ENCODE measurements at regions of chr1 and their contacts with region 1.

Region 1: GRCh38 chr1:234599617-234600417 is 10.2 kb downstream of the IRF2BP2 start:
- DNase-seq: peak; percentile 84 to 92 (median 86)
- ATAC-seq: peak; percentile 74
- H3K4me3 ChIP-seq: peak overlapping the region; percentile 46
- H3K27ac ChIP-seq: peak overlapping the region; percentile 90
- H3K4me1 ChIP-seq: peaks cover 21 to 49% of the 10 kb centered on the region in 2 experiments
- H3K27me3 ChIP-seq: no peaks in the 10 kb centered on the region
- CTCF ChIP-seq: peak in 1 of 3 experiments; percentile 3; a peak in 1 of 6 replicates
- EP300 ChIP-seq: peak; percentile 18; the same call in 1 of the 2 replicates
- POLR2A ChIP-seq: peak; percentile 79
- RAD21 ChIP-seq: peak; percentile 4 to 23; a peak in 2 of 4 replicates

Region 2: GRCh38 chr1:234114648-234115307 is 485.0 kb before region 1 on chr1:
- CTCF ChIA-PET with region 1: no interaction called
- POLR2A ChIA-PET with region 1: no interaction called
- in situ Hi-C with region 1: no loop called
- intact Hi-C with region 1: loop called (anchors 10 kb)
- DNase-seq: peak; percentile 35 to 57 (median 41)
- ATAC-seq: peak; percentile 76
- H3K4me3 ChIP-seq: no peak overlapping the region
- H3K27ac ChIP-seq: no peak overlapping the region
- H3K4me1 ChIP-seq: 0 out of 5 replicates have a peak, but pooled peaks cover 0 to 3% of the 10 kb centered on the region in 2 experiments
- H3K27me3 ChIP-seq: peaks cover 7 to 22% of the 10 kb centered on the region in 2 experiments; a peak in 4 of 5 replicates
- CTCF ChIP-seq: peak; percentile 59 to 86 (median 75)
- EP300 ChIP-seq: no peak
- POLR2A ChIP-seq: no peak
- RAD21 ChIP-seq: peak; percentile 65 to 73

Region 3: DNA sequence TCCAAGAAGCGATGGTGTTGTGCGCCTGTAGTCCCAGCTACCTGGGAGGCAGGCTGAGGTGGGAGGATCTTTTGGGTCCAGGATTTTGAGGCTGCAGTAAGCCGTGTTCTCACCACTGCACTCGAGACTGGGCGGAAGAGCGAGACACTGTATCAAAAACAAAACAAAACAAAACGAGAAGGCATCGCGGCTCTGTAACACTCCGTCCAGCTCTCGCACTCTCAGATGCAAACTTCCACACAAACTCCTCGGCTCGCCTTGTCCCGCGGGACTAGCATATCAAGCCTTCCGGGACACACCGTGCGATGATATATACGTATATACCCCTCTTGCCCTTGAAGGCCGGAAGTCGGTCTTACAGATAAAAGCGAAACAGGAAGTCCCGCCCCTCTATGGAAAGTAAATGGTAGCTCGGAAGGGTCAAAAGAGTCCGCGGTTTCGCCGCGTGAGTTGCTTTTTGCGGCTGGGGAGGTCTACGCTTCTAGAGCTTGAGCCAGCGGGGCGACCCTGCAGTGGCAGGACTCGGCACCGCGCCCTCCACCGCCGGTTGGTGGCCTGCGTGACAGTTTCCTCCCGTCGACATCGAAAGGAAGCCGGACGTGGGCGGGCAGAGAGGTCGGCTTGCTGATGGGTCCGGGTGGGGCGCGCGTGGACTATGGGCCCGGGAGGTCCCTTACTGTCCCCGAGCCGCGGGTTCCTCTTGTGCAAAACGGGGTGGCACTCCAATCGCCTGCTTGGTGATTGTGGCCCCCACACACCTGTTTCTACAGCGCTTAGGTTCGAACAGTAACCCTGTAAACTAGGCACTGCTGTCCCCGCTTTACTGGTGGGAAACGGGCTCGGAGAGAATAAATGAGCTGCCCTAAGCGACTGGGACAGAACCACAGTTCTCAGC is 226.5 kb before region 1 on chr1 and contains the start of gene COA6:
- CTCF ChIA-PET with region 1: no interaction called
- POLR2A ChIA-PET with region 1: interaction called, 3 read pairs
- in situ Hi-C with region 1: no loop called
- intact Hi-C with region 1: loop called (anchors 5 kb)
- DNase-seq: peak; percentile 90 to 99 (median 92)
- ATAC-seq: peak; percentile 90
- H3K4me3 ChIP-seq: peak within 1 kb of the TSS; percentile 81
- H3K27ac ChIP-seq: peak within 1 kb of the TSS; percentile 93
- H3K4me1 ChIP-seq: peaks cover 5 to 36% of the 10 kb centered on the region in 2 experiments
- H3K27me3 ChIP-seq: no peaks in the 10 kb centered on the region
- CTCF ChIP-seq: no peak; a peak in 1 of 6 replicates
- EP300 ChIP-seq: peak; percentile 63
- POLR2A ChIP-seq: peak; percentile 100
- RAD21 ChIP-seq: peak in 1 of 2 experiments; percentile 20; a peak in 2 of 4 replicates
- polyA plus RNA-seq, gene COA6: 171 to 187 TPM

Region 4: DNA sequence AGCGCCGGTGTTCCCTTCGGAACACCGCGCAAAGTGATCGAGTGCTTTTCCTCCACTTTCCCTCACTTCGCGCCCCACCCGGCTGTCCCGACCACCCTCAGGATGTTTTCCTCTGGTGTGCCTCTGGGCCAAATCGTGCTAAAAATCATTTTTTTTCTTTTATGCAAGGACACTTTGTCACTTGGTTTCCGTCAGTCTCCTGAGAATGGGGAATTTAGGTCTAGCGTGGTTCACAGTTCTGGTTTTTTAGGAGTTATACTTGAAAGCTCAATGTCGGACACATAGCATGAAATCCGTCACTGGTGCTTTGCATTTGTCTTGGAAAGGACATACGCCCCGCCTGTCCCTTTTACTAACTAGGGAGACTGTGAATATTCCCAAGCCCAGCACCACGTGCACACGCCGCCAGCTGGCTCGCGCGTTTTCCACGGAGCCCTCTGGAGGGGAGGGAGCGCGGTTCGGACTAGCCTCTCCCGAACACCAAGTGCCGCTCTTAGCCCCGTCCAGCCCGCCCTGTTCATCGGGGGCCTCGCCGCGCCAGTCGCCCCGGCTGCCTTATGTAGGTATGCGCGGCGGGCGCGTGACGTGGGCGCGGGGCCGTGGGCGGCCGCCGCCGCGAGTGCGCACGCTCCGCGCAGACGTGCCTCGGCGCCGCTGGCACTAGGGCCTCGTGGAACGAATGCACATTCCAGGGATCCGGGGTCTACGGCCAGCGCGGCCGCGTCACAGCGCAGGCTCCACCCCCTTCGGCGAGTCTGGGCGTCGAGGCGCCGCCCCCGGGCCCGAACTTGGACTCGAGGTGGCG is 10.7 kb after region 1 on chr1:
- CTCF ChIA-PET with region 1: no interaction called
- POLR2A ChIA-PET with region 1: interaction called, 26 read pairs
- in situ Hi-C with region 1: no loop called
- intact Hi-C with region 1: no loop called
- DNase-seq: peak; percentile 70 to 84 (median 74)
- ATAC-seq: peak; percentile 3
- H3K4me3 ChIP-seq: peak overlapping the region; percentile 38
- H3K27ac ChIP-seq: peak overlapping the region; percentile 82
- H3K4me1 ChIP-seq: peaks cover 41 to 49% of the 10 kb centered on the region in 2 experiments
- H3K27me3 ChIP-seq: no peaks in the 10 kb centered on the region
- CTCF ChIP-seq: no peak; a peak in 1 of 6 replicates
- EP300 ChIP-seq: no peak
- POLR2A ChIP-seq: peak; percentile 78
- RAD21 ChIP-seq: peak in 1 of 2 experiments; percentile 36; a peak in 2 of 4 replicates

Region 5: GRCh38 chr1:234862944-234863515 is 263.2 kb after region 1 on chr1:
- CTCF ChIA-PET with region 1: no interaction called
- POLR2A ChIA-PET with region 1: interaction called, 11 read pairs
- in situ Hi-C with region 1: no loop called
- intact Hi-C with region 1: loop called (anchors 2 kb)
- DNase-seq: no peak
- ATAC-seq: no peak
- H3K4me3 ChIP-seq: no peak overlapping the region
- H3K27ac ChIP-seq: no peak overlapping the region
- H3K4me1 ChIP-seq: peaks cover 26 to 42% of the 10 kb centered on the region in 2 experiments; a peak in 4 of 5 replicates
- H3K27me3 ChIP-seq: no peaks in the 10 kb centered on the region
- CTCF ChIP-seq: no peak
- EP300 ChIP-seq: no peak
- POLR2A ChIP-seq: no peak
- RAD21 ChIP-seq: 0 out of 4 replicates have a peak, but pooled peaks of 1 of the 2 experiments have one; percentile 9

Region 6: GRCh38 chr1:234978397-234979295 is 378.8 kb after region 1 on chr1:
- CTCF ChIA-PET with region 1: no interaction called
- POLR2A ChIA-PET with region 1: interaction called, 4 read pairs
- in situ Hi-C with region 1: no loop called
- intact Hi-C with region 1: loop called (anchors 5 kb)
- DNase-seq: peak; percentile 60 to 84 (median 78)
- ATAC-seq: peak; percentile 16
- H3K4me3 ChIP-seq: no peak overlapping the region
- H3K27ac ChIP-seq: peak overlapping the region; percentile 2; the same call in 1 of the 3 replicates
- H3K4me1 ChIP-seq: peaks cover 49 to 85% of the 10 kb centered on the region in 2 experiments
- H3K27me3 ChIP-seq: no peaks in the 10 kb centered on the region
- CTCF ChIP-seq: peak in 2 of 3 experiments; percentile 10 to 41; a peak in 3 of 6 replicates
- EP300 ChIP-seq: peak; percentile 81
- POLR2A ChIP-seq: no peak
- RAD21 ChIP-seq: peak; percentile 39 to 57

Region 7: DNA sequence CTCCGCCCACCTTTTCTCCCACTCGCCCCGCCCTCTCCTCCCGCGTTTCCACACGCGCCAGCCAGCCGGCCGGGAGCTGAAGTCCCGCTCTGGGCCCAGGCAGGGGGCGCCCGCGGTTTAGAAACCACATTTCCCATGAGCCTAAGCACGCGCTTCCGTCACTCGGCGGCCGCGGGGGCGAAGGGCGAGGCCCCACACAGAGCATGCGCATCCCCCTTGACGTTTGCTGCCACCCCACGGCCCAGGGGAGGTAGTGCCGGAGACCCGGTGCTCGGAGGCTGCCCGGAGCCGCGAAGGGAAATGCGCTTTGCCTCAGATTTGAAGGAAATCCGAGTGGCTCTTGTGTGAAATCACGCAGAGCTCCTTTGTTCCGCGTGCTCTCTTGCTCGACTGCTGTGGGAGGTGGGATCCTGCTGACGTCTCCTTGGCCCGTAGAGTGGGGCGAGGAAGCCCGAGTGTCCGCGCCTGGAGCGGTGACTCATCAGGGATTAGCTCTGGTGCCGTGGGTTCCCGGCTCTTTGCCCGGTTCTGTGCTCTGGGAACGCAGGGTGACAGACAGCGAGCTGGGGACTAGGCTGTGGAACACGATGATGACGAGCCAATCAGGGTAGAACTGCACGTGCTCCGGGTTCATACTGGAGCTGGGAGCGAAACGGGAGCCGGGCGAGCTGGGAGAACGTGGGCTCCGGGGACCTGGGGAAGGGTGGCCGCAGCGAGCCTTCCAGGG is 904.8 kb after region 1 on chr1:
- CTCF ChIA-PET with region 1: no interaction called
- POLR2A ChIA-PET with region 1: no interaction called
- in situ Hi-C with region 1: no loop called
- intact Hi-C with region 1: loop called (anchors 10 kb)
- DNase-seq: peak; percentile 97 to 100 (median 98)
- ATAC-seq: peak; percentile 87
- H3K4me3 ChIP-seq: peak overlapping the region; percentile 66
- H3K27ac ChIP-seq: peak overlapping the region; percentile 96
- H3K4me1 ChIP-seq: peaks cover 18 to 21% of the 10 kb centered on the region in 2 experiments; a peak in 4 of 5 replicates
- H3K27me3 ChIP-seq: no peaks in the 10 kb centered on the region
- CTCF ChIP-seq: peak; percentile 90 to 97 (median 91)
- EP300 ChIP-seq: 0 out of 2 replicates have a peak, but pooled peaks have one; percentile 21
- POLR2A ChIP-seq: peak; percentile 97
- RAD21 ChIP-seq: peak; percentile 50 to 57

Measured in K562 (cell line).